Gastrocnemius medialis (tissue), 4 donors: ENCODE measurements at regions of chr10 and their contacts with region 1.

Region 1: GRCh38 chr10:101840741-101841453 is 2.7 kb downstream of the KCNIP2 start:
- DNase-seq: peak; percentile 40 to 60
- ATAC-seq: peak; percentile 80 to 86
- H3K4me3 ChIP-seq: peak overlapping the region; percentile 29 to 53 (median 46)
- H3K27ac ChIP-seq: no peak overlapping the region
- H3K4me1 ChIP-seq: peaks cover 21 to 39% of the 10 kb centered on the region in 2 donors
- H3K27me3 ChIP-seq: no peaks in the 10 kb centered on the region
- CTCF ChIP-seq: peak; percentile 72 to 95 (median 89)
- POLR2A ChIP-seq: no peak

Region 2: DNA sequence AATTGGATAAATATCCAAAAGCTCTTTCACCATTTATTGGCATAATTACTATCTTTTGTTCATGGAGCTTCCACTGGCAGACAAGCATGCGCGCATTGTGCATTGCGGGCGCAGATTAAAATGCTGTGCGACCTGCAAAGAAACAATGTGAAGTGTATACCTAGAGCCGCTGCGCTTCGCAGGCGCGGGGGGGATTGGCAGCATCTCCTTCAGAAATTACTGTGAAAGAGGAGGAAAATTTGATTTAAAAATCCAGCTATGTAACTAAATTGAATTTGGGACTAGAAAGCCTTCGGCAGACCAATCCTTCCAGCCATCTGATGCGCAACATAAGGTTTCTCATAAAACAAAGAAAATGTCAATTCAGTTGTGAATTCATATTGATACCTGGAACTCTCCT is 47.4 kb before region 1 on chr10:
- in situ Hi-C with region 1: no loop called
- intact Hi-C with region 1: no loop called
- DNase-seq: no peak
- ATAC-seq: no peak
- H3K4me3 ChIP-seq: no peak overlapping the region
- H3K27ac ChIP-seq: no peak overlapping the region
- H3K4me1 ChIP-seq: no peaks in the 10 kb centered on the region
- H3K27me3 ChIP-seq: no peaks in the 10 kb centered on the region
- CTCF ChIP-seq: no peak
- POLR2A ChIP-seq: no peak

Region 3: GRCh38 chr10:101889256-101890210 is 48.6 kb after region 1 on chr10:
- in situ Hi-C with region 1: no loop called
- intact Hi-C with region 1: loop called (anchors 2 kb)
- DNase-seq: peak; percentile 25 to 68
- ATAC-seq: peak; percentile 55 to 68
- H3K4me3 ChIP-seq: no peak overlapping the region
- H3K27ac ChIP-seq: no peak overlapping the region
- H3K4me1 ChIP-seq: peaks cover 12 to 13% of the 10 kb centered on the region in 2 donors
- H3K27me3 ChIP-seq: no peaks in the 10 kb centered on the region
- CTCF ChIP-seq: peak; percentile 75 to 84 (median 75)
- POLR2A ChIP-seq: no peak